ENCODE measurements at regions of chr2 and their contacts with region 1.

Region 1: GRCh38 chr2:152335010-152335725 is at the start of gene FMNL2:
- DNase-seq: peak; percentile 91
- H3K4me3 ChIP-seq: peak within 1 kb of the TSS; percentile 74 to 98 (median 90)
- H3K27ac ChIP-seq: peak within 1 kb of the TSS; percentile 83 to 88 (median 86)
- H3K4me1 ChIP-seq: peaks cover 0 to 38% (median 24%) of the 10 kb centered on the region in 4 donors
- H3K27me3 ChIP-seq: no peaks in the 10 kb centered on the region
- CTCF ChIP-seq: no peak
- EP300 ChIP-seq: no peak
- POLR2A ChIP-seq: peak in 1 of 2 donors; percentile 32
- total RNA-seq, gene FMNL2: 17.8 to 30.5 (median 24.7) TPM

Region 2: DNA sequence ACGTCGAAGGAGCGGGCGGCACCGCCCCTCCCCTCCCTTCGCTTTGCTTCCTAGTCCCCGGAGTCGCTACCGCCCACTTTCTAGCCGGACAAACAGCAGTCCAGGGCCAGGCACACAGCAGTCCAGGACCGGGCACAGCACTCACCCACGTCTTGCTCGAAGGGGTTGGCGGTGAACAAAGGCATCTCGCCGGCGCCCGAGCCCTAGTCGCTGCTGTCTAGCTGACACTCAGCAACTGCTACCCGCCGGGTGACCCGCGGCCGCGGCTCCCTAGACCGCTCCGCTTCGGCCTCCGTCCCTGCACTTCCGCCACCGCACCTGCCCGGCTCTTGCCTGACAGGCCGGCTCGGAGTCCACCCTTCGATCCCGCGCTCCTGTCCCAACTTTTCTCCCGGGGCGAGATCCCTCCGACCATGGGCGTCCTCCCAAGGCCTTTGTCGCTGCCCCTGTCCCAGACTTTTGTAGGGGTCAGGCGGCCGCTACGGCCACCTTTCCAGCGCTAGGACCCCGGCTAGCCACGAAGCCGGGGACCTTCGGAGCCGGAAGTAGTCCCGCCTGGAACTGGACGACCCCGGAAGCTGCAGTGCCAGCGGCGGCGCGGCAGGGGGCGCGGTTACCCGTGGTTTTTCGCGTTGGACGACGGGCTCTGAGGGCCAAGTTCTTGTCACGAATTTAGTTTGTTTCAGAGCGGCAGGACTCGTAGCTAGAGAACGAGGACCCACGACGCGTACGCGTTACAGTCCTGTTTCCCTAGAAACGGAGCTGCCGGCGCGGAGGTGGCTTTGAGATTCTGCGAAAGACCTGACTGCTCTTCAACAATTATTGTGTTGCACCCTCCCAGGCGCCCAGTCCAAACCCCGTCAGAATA is 159.5 kb before region 1 on chr2 and contains the start of gene STAM2:
- intact Hi-C with region 1: loop called (anchors 2 kb)
- DNase-seq: peak; percentile 95
- H3K4me3 ChIP-seq: peak within 1 kb of the TSS; percentile 64 to 94 (median 77)
- H3K27ac ChIP-seq: peak within 1 kb of the TSS; percentile 89 to 98 (median 96)
- H3K4me1 ChIP-seq: peaks cover 0 to 34% (median 23%) of the 10 kb centered on the region in 4 donors
- H3K27me3 ChIP-seq: no peaks in the 10 kb centered on the region
- CTCF ChIP-seq: peak; percentile 82 to 94 (median 88)
- EP300 ChIP-seq: peak in 1 of 4 donors; percentile 8
- POLR2A ChIP-seq: peak; percentile 71 to 77
- total RNA-seq, gene STAM2: 26.3 to 36.7 (median 33.5) TPM

Region 3: GRCh38 chr2:152222975-152223637 is 112.1 kb before region 1 on chr2:
- intact Hi-C with region 1: loop called (anchors 5 kb)
- DNase-seq: peak; percentile 71
- H3K4me3 ChIP-seq: no peak overlapping the region
- H3K27ac ChIP-seq: peak overlapping the region; percentile 20 to 55 (median 38)
- H3K4me1 ChIP-seq: peaks cover 0 to 35% (median 26%) of the 10 kb centered on the region in 4 donors
- H3K27me3 ChIP-seq: no peaks in the 10 kb centered on the region
- CTCF ChIP-seq: no peak
- EP300 ChIP-seq: no peak
- POLR2A ChIP-seq: no peak

Region 4: GRCh38 chr2:152415231-152415642 is 80.1 kb after region 1 on chr2:
- intact Hi-C with region 1: no loop called
- DNase-seq: no peak
- H3K4me3 ChIP-seq: no peak overlapping the region
- H3K27ac ChIP-seq: no peak overlapping the region
- H3K4me1 ChIP-seq: peaks cover 0 to 20% (median 15%) of the 10 kb centered on the region in 4 donors
- H3K27me3 ChIP-seq: no peaks in the 10 kb centered on the region
- CTCF ChIP-seq: no peak
- EP300 ChIP-seq: no peak
- POLR2A ChIP-seq: no peak

Region 5: GRCh38 chr2:152525277-152525838 is 190.2 kb after region 1 on chr2:
- intact Hi-C with region 1: no loop called
- DNase-seq: no peak
- H3K4me3 ChIP-seq: no peak overlapping the region
- H3K27ac ChIP-seq: no peak overlapping the region
- H3K4me1 ChIP-seq: peaks cover 0 to 15% (median 7%) of the 10 kb centered on the region in 4 donors
- H3K27me3 ChIP-seq: no peaks in the 10 kb centered on the region
- CTCF ChIP-seq: no peak
- EP300 ChIP-seq: no peak
- POLR2A ChIP-seq: no peak

Region 6: GRCh38 chr2:152620208-152620607 is 285.0 kb after region 1 on chr2:
- intact Hi-C with region 1: loop called (anchors 5 kb)
- DNase-seq: peak; percentile 75
- H3K4me3 ChIP-seq: peak overlapping the region in 2 of 4 donors; percentile 16 to 17
- H3K27ac ChIP-seq: peak overlapping the region; percentile 11 to 81 (median 68)
- H3K4me1 ChIP-seq: peaks cover 0 to 12% (median 5%) of the 10 kb centered on the region in 4 donors
- H3K27me3 ChIP-seq: no peaks in the 10 kb centered on the region
- CTCF ChIP-seq: no peak
- EP300 ChIP-seq: peak in 3 of 4 donors; percentile 11 to 65 (median 47)
- POLR2A ChIP-seq: no peak

Region 7: DNA sequence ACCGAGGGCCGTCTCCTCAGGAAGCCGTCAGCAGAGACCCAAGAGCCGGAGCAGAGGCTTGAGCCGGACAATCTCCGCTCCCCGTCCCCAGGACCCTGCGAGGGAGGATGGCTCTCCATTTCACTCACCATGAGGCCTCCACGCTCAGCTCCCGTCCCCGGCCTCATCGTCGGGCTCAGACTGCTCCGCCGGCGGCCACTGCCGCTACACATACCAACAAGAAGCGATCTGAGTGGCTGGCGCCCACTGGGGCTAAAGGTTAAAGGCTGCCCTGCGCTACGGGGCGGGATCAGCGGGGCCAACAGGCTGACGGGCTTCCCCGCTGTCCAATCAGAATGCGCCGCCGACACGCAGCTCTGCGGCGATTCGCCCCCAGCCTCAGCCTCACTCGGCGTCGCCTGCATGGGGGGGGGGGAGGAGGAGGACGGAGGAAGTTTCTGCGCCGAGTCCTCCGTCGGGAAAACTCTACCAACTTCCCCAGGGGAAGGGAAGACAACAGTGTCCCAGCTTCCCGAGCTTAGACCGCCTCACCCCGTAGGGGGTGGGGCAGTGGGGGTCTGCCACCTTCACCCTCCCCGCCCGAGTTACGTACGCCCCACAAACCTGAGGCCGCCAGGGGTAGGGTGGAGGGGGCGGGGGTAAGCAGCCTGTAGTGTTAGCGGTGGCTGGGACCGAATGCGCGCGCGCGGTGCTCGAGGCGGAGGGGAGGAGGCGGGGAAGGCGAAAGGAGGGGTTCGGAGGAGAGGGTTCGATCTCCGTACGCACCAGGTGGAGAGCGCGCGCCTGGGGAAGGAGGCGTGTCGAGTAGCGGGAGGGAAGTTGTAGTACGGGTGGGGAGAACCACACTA is 382.3 kb after region 1 on chr2 and contains the start of gene PRPF40A:
- intact Hi-C with region 1: loop called (anchors 1 kb)
- DNase-seq: peak; percentile 99
- H3K4me3 ChIP-seq: peak within 1 kb of the TSS; percentile 87 to 94 (median 94)
- H3K27ac ChIP-seq: peak within 1 kb of the TSS; percentile 96 to 98 (median 97)
- H3K4me1 ChIP-seq: peaks cover 0 to 47% (median 36%) of the 10 kb centered on the region in 4 donors
- H3K27me3 ChIP-seq: no peaks in the 10 kb centered on the region
- CTCF ChIP-seq: no peak
- EP300 ChIP-seq: no peak
- POLR2A ChIP-seq: peak; percentile 76 to 85
- total RNA-seq, gene PRPF40A: 69.2 to 200 (median 80.7) TPM

Measured in sigmoid colon (tissue), 7 donors.